ENCODE measurements at regions of chr13 and their contacts with region 1.

Region 1: DNA sequence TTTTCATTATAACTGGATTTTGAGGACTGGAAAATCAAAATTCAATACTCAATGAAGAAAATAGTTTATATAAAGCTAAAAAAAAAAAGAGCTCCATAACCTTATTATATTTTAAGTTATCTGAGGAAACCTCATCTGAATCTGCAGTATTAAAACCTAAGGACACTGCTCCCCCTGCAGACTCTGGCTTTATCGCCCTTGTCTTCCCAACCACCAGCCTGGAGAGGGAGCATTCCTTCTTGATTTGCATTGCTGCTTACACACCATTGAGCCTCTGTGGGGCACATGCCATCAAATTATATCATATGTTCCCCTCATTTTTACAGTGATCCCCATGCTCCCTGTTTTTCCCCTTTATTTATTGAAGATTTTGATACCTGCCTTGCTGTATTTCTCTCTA is 871.4 kb upstream of the GPC6 start:
- DNase-seq: peak; percentile 41 to 45
- H3K4me3 ChIP-seq: no peak overlapping the region
- H3K4me3 Mint-ChIP-seq: no peak overlapping the region
- H3K27ac Mint-ChIP-seq: no peak overlapping the region
- H3K4me1 ChIP-seq: 0 out of 2 replicates have a peak, but pooled peaks cover 7% of the 10 kb centered on the region
- H3K4me1 Mint-ChIP-seq: no peaks in the 10 kb centered on the region
- H3K27me3 ChIP-seq: no peaks in the 10 kb centered on the region
- H3K27me3 Mint-ChIP-seq: no peaks in the 10 kb centered on the region
- CTCF ChIP-seq: peak; percentile 47 to 51

Region 2: GRCh38 chr13:92187378-92187989 is 167.7 kb before region 1 on chr13:
- CTCF ChIA-PET with region 1: no interaction called
- POLR2A ChIA-PET with region 1: no interaction called
- intact Hi-C with region 1: loop called (anchors 1 kb)
- DNase-seq: peak in 1 of 2 experiments; percentile 63
- H3K4me3 ChIP-seq: no peak overlapping the region
- H3K4me3 Mint-ChIP-seq: no peak overlapping the region
- H3K27ac Mint-ChIP-seq: no peak overlapping the region
- H3K4me1 ChIP-seq: no peaks in the 10 kb centered on the region
- H3K4me1 Mint-ChIP-seq: no peaks in the 10 kb centered on the region
- H3K27me3 ChIP-seq: no peaks in the 10 kb centered on the region
- H3K27me3 Mint-ChIP-seq: no peaks in the 10 kb centered on the region
- CTCF ChIP-seq: peak; percentile 80 to 82

Region 3: GRCh38 chr13:92317066-92317465 is 38.1 kb before region 1 on chr13:
- CTCF ChIA-PET with region 1: no interaction called
- POLR2A ChIA-PET with region 1: no interaction called
- intact Hi-C with region 1: no loop called
- DNase-seq: peak in 1 of 2 experiments; percentile 46
- H3K4me3 ChIP-seq: no peak overlapping the region
- H3K4me3 Mint-ChIP-seq: no peak overlapping the region
- H3K27ac Mint-ChIP-seq: peak overlapping the region; percentile 3
- H3K4me1 ChIP-seq: peaks cover 10% of the 10 kb centered on the region
- H3K4me1 Mint-ChIP-seq: peaks cover 7% of the 10 kb centered on the region
- H3K27me3 ChIP-seq: no peaks in the 10 kb centered on the region
- H3K27me3 Mint-ChIP-seq: no peaks in the 10 kb centered on the region
- CTCF ChIP-seq: no peak